CD14-positive monocyte (primary cell): ENCODE measurements at regions of chr13 and their contacts with region 1.

Region 1: DNA sequence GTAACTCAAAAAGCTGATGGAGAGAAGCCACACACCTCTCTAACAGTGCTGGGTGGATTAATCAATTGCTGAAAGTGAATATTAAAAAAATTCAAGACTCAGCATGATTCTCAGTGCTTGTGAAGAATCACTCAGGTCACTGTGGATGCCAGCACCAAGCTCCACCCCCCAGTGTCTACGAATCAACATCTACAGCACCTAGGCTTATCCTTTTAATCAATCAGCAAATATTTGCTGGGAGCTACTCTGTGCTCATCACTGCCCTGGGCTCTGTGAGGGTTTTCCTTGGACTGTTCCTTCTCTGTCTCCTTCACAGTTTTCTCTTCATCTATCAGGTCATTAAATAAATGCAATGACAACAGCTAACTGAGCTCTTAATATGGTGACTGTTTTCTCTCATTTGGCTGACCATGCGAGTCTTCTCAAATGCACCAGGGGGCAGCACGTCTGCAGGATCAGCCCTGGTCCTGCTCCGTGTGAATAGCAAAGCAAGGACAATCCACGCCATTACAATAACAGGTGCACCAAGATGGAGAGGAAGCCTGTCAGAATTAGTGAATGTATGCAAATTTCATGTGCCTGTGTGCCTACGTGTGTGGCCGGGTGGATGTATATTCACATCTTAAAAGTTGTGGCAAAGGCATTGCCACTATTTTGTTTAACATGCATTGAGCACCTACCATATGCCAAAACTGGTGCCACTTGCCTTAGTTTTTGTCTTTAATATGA is 14.6 kb upstream of the C13orf42 start:
- DNase-seq: peak; percentile 48 to 65 (median 50)
- H3K4me3 ChIP-seq: no peak overlapping the region
- H3K4me3 Mint-ChIP-seq: no peak overlapping the region
- H3K27ac ChIP-seq: no peak overlapping the region
- H3K27ac Mint-ChIP-seq: no peak overlapping the region
- H3K4me1 ChIP-seq: no peaks in the 10 kb centered on the region
- H3K4me1 Mint-ChIP-seq: no peaks in the 10 kb centered on the region
- H3K27me3 ChIP-seq: peaks cover 2 to 10% of the 10 kb centered on the region in 2 donors
- H3K27me3 Mint-ChIP-seq: peaks cover 6 to 19% (median 7%) of the 10 kb centered on the region in 3 donors
- CTCF ChIP-seq: peak; percentile 90

Region 2: DNA sequence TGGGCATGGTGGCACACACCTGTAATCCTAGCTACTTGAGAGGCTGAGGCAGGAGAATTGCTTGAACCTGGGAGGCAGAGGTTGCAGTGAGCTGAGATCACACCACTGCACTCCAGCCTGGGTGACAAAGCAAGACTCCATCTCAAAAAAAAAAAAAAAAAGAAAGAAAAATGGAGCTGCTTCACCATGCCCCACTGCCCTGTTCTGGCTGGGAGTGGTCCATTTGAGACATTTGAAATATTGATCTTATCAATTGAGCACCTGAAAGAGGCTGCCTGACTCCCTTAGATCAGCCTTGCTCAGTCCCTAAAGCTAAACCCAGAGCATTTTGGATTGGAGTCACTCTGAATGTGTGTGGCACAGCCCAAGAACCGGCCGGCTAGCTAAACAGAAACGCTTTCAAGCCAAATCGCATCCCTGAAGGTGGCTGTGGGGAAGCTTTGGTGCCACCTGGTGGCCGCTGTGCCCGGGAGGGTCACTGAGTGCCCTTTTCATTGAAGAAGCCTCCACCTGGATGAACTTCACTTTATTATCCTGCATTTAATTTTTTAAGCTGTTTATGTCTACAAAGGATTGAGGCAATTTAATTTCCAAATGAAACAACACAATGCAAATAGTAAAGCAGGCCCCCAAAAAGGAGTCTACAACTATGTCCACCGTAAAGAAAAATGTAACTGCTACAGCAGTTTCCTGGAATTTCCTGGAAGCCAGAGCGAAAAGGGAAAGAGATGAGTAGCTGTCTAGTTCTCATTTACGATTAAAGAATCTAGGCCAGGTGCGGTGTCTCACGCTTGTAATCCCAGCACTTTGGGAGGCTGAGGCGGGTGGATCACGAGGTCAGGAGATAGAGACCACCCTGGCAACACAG is 160.7 kb after region 1 on chr13:
- intact Hi-C with region 1: loop called (anchors 1 to 2 kb)
- DNase-seq: peak; percentile 52 to 65 (median 55)
- H3K4me3 ChIP-seq: no peak overlapping the region
- H3K4me3 Mint-ChIP-seq: peak overlapping the region in 1 of 2 donors; percentile 55
- H3K27ac ChIP-seq: no peak overlapping the region
- H3K27ac Mint-ChIP-seq: no peak overlapping the region
- H3K4me1 ChIP-seq: no peaks in the 10 kb centered on the region
- H3K4me1 Mint-ChIP-seq: peaks cover 2% of the 10 kb centered on the region
- H3K27me3 ChIP-seq: no peaks in the 10 kb centered on the region
- H3K27me3 Mint-ChIP-seq: peaks cover 2 to 5% (median 3%) of the 10 kb centered on the region in 3 donors
- CTCF ChIP-seq: peak; percentile 93

Region 3: DNA sequence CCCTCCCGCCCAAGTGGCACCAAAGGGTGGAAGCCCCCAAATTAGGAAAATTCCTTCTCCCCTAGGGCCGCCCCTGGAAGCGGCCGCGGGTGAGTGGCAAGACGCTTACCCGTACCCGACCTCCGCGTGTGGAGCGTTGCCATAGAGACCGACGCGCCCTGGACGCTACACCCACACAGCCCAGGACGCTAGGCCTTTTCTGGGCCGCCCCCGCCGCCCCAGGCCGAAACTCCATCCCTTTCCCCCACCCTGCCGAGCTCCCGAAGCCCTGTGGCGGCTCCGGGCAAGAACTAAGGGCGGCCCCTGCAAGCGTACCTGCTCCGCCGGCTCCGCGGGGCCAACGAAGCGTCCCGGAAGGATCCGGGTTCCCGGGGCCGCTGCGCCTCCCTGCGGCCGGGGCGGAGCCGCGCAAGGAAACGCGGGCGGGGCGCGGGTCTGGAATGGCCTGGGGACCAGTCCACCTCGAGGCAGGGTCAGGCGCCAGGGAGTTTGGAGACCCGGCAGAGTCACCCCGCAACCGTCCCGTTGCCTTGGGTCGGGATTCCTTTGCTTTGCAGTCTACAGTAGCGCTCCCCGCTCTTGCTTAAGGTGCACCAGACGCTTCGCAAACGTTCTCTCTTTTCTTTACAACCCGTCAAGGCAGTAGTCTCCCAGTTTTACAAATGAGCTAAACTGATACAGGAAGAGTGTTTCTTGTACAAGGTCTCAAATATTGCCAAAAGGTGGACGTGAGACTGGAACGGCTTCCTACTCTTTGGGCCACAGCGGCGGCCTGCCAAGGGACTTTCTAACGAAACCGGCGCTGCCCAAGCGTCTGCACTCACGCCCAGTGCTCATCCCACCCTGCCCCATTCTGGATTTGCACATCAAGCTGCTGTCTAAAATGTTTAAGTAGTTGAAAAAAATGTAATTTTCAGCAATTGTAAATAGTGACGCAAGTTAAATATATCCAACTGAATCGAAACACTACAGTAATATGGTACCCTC is 1003.3 kb after region 1 on chr13 and contains the start of gene NEK5:
- intact Hi-C with region 1: loop called in 1 of 2 experiments (anchors 10 kb)
- DNase-seq: peak; percentile 21 to 43 (median 25)
- H3K4me3 ChIP-seq: peak within 1 kb of the TSS; percentile 46 to 76 (median 62)
- H3K4me3 Mint-ChIP-seq: peak within 1 kb of the TSS; percentile 92 to 100
- H3K27ac ChIP-seq: no peak within 1 kb of the TSS
- H3K27ac Mint-ChIP-seq: peak within 1 kb of the TSS in 4 of 7 donors; percentile 4 to 79 (median 61)
- H3K4me1 ChIP-seq: peaks cover 16 to 21% of the 10 kb centered on the region in 2 donors
- H3K4me1 Mint-ChIP-seq: peaks cover 21% of the 10 kb centered on the region
- H3K27me3 ChIP-seq: no peaks in the 10 kb centered on the region
- H3K27me3 Mint-ChIP-seq: peaks cover 3 to 14% (median 4%) of the 10 kb centered on the region in 3 donors
- CTCF ChIP-seq: peak; percentile 78
- polyA plus RNA-seq, gene NEK5: 0.07 TPM in 1 of 3 donors, not detected in the others